Endothelial cell of umbilical vein (primary cell): ENCODE measurements at regions of chr6 and their contacts with region 1.

Region 1: DNA sequence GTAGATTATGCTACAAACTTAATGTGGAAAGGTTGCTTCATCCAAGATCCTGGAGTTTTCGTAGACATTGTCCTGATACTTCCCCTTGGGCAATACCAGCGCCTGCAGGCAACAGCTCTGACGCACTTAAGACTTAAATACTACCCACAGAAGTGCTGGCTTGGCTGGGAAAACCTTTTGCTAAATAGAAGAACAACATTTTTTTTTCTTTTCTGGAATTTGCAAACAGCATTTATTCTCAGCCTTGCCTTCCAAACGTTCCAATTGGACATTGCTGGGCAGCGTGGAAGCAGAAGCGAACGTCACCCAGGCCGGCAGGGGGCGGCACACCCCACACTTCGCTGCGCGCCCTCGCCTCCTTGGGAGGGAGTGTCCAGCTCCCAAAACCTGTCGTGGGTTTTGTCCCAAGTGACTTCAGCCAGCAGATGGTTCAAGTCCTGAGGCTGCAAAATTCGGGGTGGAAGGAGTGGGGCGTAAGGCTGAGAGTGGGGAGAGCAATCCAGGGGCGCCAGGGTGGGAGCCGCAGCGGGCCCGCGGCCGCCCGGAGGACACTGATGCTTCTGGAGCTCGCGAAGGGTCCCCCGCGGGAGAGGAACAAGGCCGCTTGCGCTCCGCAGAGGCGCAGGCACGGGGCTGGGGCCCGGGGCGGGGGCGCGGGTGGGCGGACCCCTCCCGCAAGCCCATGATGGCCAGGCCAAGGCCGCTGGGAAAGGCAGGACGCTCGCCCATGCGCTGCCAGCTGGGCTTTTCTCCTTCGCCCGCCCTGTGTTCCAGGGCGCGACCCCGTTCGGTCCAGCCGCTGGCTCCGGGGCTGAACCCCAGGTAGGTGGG is 60.8 kb upstream of the MAP3K4 start:
- DNase-seq: peak; percentile 59
- H3K4me3 ChIP-seq: peak overlapping the region; percentile 22 to 39 (median 31)
- H3K27ac ChIP-seq: no peak overlapping the region
- H3K4me1 ChIP-seq: peaks cover 2% of the 10 kb centered on the region
- H3K27me3 ChIP-seq: peaks cover 0 to 3% of the 10 kb centered on the region in 2 experiments
- CTCF ChIP-seq: peak; percentile 87 to 94
- POLR2A ChIP-seq: no peak

Region 2: DNA sequence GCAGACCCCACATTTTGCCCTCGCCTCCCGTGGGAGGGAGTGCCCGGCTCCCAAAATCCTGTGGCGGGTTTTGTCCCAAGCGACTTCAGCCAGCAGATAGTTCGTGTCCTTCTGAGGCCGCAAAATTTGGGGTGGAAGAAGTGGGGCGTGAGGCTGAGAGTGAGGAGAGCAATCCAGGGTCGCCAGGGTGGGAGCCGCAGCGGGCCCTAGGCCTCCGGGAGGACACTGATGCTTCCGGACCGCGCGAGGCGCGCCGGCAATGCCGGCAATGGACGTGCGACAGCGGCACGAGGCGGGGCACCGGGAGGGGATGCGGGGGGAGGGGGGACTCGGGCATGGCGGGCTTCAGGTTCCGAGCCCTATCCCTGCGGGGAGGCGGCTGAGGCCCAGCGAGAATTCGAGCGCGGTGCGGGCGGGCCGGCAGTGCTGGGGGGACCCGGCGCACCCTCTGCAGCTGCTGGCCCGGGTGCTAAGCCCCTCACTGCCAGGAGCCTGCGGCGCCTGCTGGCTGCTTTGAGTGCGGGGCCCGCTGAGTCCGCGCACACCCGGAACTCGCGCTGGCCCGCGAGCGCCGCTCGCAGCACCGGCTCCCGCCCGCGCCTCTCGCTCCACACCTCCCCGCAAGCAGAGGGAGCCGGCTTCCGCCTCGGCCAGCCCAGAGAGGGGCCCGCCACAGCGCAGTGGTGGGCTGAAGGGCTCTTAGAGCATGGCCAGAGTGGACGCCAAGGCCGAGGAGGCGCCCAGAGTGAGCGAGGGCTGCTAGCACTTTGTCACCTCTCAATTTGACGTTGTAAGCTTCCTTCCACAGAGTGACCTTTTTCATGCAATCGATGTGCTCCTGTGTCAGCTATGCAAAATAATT is 410.5 kb before region 1 on chr6:
- CTCF ChIA-PET with region 1: interaction called, 9 read pairs
- POLR2A ChIA-PET with region 1: no interaction called
- dilution Hi-C with region 1: no loop called
- intact Hi-C with region 1: loop called (anchors 10 kb)
- DNase-seq: peak; percentile 25
- H3K4me3 ChIP-seq: peak overlapping the region; percentile 18 to 55 (median 41)
- H3K27ac ChIP-seq: no peak overlapping the region
- H3K4me1 ChIP-seq: peaks cover 4% of the 10 kb centered on the region
- H3K27me3 ChIP-seq: peaks cover 0 to 8% of the 10 kb centered on the region in 2 experiments
- CTCF ChIP-seq: peak; percentile 80 to 91
- POLR2A ChIP-seq: no peak

Region 3: GRCh38 chr6:160950507-160950906 is 19.7 kb after region 1 on chr6:
- CTCF ChIA-PET with region 1: interaction called, 10 read pairs
- POLR2A ChIA-PET with region 1: no interaction called
- dilution Hi-C with region 1: no loop called
- intact Hi-C with region 1: no loop called
- DNase-seq: no peak
- H3K4me3 ChIP-seq: no peak overlapping the region
- H3K27ac ChIP-seq: no peak overlapping the region
- H3K4me1 ChIP-seq: no peaks in the 10 kb centered on the region
- H3K27me3 ChIP-seq: no peaks in the 10 kb centered on the region
- CTCF ChIP-seq: no peak
- POLR2A ChIP-seq: no peak

Region 4: GRCh38 chr6:160992061-160992979 is 61.6 kb after region 1 on chr6:
- CTCF ChIA-PET with region 1: interaction called, 15 read pairs
- POLR2A ChIA-PET with region 1: no interaction called
- dilution Hi-C with region 1: no loop called
- intact Hi-C with region 1: loop called (anchors 2 kb)
- DNase-seq: peak; percentile 78
- H3K4me3 ChIP-seq: peak overlapping the region; percentile 80 to 88 (median 80)
- H3K27ac ChIP-seq: peak overlapping the region; percentile 49
- H3K4me1 ChIP-seq: peaks cover 14% of the 10 kb centered on the region
- H3K27me3 ChIP-seq: no peaks in the 10 kb centered on the region
- CTCF ChIP-seq: peak; percentile 43 to 66
- POLR2A ChIP-seq: no peak

Region 5: DNA sequence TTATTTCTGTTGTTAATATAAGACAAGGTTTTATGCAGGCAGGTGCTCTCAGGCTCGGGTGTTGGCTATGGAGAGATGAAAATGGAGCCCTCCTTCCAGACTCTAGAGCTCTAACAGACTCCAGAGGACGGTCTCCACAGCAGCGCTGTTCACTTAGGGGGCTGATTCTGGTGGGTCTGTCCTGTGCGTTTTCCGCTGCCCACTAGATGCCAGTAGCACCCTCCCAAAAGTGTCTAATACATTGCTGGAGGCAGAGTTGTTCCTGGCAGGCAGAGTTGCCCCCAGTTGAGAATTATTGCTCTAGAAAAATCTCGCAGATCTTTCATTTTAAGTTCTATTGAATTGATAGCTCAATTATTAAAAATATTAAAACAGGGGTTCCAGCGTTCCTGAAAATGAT is 170.8 kb after region 1 on chr6:
- CTCF ChIA-PET with region 1: interaction called, 13 read pairs
- POLR2A ChIA-PET with region 1: no interaction called
- dilution Hi-C with region 1: no loop called
- intact Hi-C with region 1: loop called (anchors 1 kb)
- DNase-seq: no peak
- H3K4me3 ChIP-seq: no peak overlapping the region
- H3K27ac ChIP-seq: no peak overlapping the region
- H3K4me1 ChIP-seq: no peaks in the 10 kb centered on the region
- H3K27me3 ChIP-seq: no peaks in the 10 kb centered on the region
- CTCF ChIP-seq: peak; percentile 8 to 26
- POLR2A ChIP-seq: no peak

Region 6: DNA sequence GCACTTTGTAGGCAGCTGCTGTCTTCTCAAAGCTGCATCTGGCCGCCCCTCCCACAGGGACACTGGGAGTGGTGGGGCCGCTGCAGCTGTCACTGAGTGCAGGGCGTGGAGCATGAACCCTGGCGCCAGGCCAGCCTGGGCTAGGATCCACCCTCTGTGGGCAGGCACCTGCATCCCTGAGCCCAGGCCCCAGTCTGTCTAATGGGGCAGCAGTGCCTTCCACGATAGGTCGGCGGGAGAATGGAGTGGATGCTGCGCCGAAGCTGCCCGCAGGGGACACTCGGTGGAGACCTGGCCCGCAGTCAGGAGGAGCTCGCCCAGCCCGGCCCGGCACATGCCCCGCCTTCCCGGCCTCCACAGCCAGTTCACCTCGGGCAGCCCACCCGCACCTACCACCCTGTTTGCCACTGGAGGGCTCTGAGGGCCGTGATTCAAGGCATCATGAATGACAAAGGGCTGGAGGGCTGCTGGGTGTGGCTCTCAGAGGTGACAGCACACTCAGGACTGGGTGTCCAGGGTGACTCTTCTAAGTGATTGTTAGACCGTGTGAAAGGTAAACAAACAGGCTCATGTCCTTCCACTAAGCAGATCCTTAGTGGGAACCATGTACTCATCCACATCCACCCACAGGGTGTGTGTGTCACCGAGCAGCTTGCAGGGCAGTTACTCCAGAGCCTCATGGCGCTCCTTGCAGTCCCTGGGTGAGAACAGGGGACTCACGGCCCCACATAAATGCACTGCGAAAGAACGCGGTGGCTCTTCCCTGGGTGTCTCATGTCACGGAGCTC is 209.2 kb after region 1 on chr6:
- CTCF ChIA-PET with region 1: interaction called, 3 read pairs
- POLR2A ChIA-PET with region 1: no interaction called
- dilution Hi-C with region 1: no loop called
- intact Hi-C with region 1: loop called (anchors 5 kb)
- DNase-seq: no peak
- H3K4me3 ChIP-seq: no peak overlapping the region
- H3K27ac ChIP-seq: no peak overlapping the region
- H3K4me1 ChIP-seq: no peaks in the 10 kb centered on the region
- H3K27me3 ChIP-seq: no peaks in the 10 kb centered on the region
- CTCF ChIP-seq: no peak
- POLR2A ChIP-seq: no peak